Ascending aorta (tissue), 2 donors: ENCODE measurements at regions of chr5 and their contacts with region 1.

Region 1: GRCh38 chr5:179265514-179266290 is 79.6 kb downstream of the ADAMTS2 start:
- DNase-seq: peak; percentile 86 to 99
- H3K4me3 ChIP-seq: peak overlapping the region in 1 of 2 donors; percentile 48
- H3K27ac ChIP-seq: peak overlapping the region; percentile 73 to 75
- H3K4me1 ChIP-seq: peaks cover 18 to 33% of the 10 kb centered on the region in 2 donors
- H3K27me3 ChIP-seq: no peaks in the 10 kb centered on the region
- CTCF ChIP-seq: no peak

Region 2: GRCh38 chr5:179089502-179089901 is 176.2 kb before region 1 on chr5:
- intact Hi-C with region 1: no loop called
- DNase-seq: no peak
- H3K4me3 ChIP-seq: no peak overlapping the region
- H3K27ac ChIP-seq: no peak overlapping the region
- H3K4me1 ChIP-seq: no peaks in the 10 kb centered on the region
- H3K27me3 ChIP-seq: no peaks in the 10 kb centered on the region
- CTCF ChIP-seq: no peak

Region 3: DNA sequence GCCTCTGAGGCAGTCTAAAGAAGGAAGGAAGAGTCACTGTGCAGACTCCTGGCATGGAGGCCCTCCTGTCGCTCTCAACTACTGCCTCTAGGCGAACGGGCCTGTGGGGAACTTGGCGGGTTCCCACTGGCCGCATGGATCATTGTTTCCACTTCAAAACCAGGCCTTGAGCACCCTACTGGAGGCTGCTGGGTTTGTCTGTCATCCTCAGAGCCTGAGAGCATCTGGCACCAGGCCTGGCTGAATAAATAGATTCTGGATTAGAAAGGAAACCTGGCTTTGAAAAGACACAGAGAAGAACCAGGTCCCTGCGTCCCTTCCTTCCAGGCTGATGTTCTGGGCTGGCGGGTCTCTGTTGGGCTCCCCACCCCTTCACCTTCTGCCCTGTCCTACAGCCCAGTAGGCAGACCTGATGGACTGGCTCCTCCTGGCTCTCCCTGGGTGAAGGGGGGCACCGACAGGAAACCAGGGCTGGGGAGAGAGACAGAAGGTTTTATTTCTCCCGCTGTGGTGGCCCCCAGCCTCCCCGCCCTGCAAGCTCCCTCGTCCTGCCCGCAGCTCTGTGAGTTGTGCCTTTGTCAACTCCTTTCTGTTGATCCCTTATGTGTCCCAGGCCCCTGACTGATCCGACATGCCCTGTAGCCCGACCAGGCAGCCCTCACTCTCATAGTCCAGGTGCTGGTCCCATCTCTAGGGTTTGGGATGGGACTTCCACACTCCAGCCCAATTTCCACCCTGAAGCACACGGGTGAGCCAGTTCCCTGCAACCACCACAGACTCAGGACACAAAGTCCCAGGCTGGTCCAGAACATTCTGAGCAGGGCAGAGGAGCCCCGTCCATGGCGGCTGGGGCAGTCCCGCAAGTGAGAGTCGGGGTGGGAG is 29.4 kb after region 1 on chr5:
- intact Hi-C with region 1: loop called (anchors 2 kb)
- DNase-seq: peak in 1 of 2 donors; percentile 86
- H3K4me3 ChIP-seq: no peak overlapping the region
- H3K27ac ChIP-seq: peak overlapping the region; percentile 54 to 55
- H3K4me1 ChIP-seq: peaks cover 0 to 7% of the 10 kb centered on the region in 2 donors
- H3K27me3 ChIP-seq: no peaks in the 10 kb centered on the region
- CTCF ChIP-seq: peak in 1 of 3 experiments; percentile 21

Region 4: GRCh38 chr5:179313849-179314521 is 48.3 kb after region 1 on chr5:
- intact Hi-C with region 1: loop called (anchors 5 kb)
- DNase-seq: peak; percentile 69 to 91
- H3K4me3 ChIP-seq: peak overlapping the region; percentile 14 to 45
- H3K27ac ChIP-seq: peak overlapping the region; percentile 63 to 75
- H3K4me1 ChIP-seq: peaks cover 4 to 6% of the 10 kb centered on the region in 2 donors
- H3K27me3 ChIP-seq: no peaks in the 10 kb centered on the region
- CTCF ChIP-seq: no peak